ENCODE measurements at regions of chr22 and their contacts with region 1.

Region 1: DNA sequence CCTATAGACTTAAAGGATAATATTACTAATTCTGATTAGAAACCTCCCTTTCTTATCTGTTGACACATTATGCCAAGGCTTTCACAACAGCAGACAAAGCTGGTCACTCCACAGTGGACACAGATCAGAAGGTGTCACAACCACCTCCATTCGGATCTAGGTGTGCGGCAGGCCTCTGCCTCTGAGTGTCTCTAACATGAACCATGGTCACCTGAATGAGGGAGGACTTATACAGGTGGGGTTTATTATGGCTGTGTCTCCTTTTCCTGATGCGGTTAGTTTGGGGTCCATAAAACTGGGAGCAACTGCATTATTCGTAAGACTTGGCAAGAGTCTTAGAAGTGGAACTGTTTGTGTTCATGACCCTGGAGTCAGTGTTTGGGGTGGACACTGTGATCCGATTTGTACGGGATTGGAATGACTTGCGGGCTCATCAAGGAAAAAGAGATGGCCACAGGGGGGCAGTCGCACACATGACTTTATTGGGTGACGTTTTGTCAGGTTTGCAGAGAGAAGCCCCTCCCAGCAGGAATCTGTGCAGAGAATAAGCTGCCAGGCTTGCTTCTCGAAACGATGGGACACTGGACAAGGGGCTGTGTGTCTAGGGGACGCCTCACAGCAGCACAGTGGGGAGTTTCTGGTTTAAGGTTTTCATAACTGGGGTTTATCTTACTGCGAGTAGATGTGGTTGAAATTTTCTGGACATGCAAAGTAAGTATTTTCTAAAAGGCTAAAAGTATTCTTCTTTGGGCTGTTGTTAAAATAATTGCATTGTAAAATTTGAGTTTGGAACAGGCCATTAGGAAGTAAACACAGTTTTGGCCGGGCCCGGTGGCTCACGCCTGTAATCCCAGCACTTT is 90.6 kb downstream of the GAB4 start:
- DNase-seq: peak; percentile 54 to 80
- ATAC-seq: no peak
- H3K4me3 ChIP-seq: no peak overlapping the region
- H3K27ac ChIP-seq: no peak overlapping the region
- H3K4me1 ChIP-seq: peaks cover 0 to 2% of the 10 kb centered on the region in 2 donors
- H3K27me3 ChIP-seq: no peaks in the 10 kb centered on the region

Region 2: DNA sequence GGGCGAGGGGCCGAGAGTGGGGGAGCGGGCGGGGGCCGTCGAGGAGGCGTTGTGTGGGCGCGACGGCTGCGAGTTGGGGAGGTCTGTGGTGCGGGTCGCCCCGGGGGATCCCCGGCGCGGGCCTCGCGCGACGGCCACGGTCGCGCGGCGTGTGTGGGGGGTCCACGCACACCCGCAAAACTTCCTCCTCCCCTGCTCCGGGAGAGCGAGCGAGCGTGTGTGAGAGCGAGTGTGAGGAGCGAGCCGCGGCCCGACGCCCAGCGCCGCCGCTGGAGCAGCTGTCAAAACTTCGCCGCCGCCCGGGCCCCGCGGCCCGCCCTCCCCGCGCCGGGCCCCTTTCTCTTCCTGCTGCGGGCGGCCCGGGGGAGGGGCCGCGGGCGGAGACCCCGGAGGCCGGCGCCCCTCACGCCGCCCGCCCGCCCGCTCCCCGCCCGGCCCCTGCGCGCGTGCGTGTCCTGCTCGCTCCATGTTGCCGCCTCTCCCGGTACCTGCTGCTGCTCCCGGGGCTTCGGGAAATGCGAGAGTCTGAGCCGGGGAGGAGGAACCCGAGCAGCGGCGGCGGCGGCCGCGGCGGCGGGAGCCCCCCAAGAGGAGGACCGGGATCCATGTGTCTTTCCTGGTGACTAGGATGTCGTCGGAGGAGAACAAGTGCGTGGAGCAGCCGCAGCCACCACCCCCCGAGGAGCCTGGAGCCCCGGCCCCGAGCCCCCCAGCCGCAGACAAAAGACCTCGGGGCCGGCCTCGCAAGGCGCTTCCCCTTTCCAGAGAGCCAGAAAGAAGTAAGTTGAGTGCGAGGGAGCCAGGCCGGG is 315.7 kb before region 1 on chr22:
- intact Hi-C with region 1: no loop called
- DNase-seq: peak in 1 of 2 donors; percentile 76
- ATAC-seq: peak; percentile 27
- H3K4me3 ChIP-seq: peak overlapping the region; percentile 43 to 80
- H3K27ac ChIP-seq: peak overlapping the region; percentile 67 to 71
- H3K4me1 ChIP-seq: no peaks in the 10 kb centered on the region
- H3K27me3 ChIP-seq: peaks cover 0 to 3% of the 10 kb centered on the region in 2 donors

Region 3: GRCh38 chr22:16774911-16775500 is 142.4 kb before region 1 on chr22:
- intact Hi-C with region 1: loop called in 1 of 2 experiments (anchors 10 kb)
- DNase-seq: no peak
- ATAC-seq: no peak
- H3K4me3 ChIP-seq: no peak overlapping the region
- H3K27ac ChIP-seq: no peak overlapping the region
- H3K4me1 ChIP-seq: no peaks in the 10 kb centered on the region
- H3K27me3 ChIP-seq: no peaks in the 10 kb centered on the region

Region 4: GRCh38 chr22:16932577-16932976 is 15.2 kb after region 1 on chr22:
- intact Hi-C with region 1: no loop called
- DNase-seq: no peak
- ATAC-seq: no peak
- H3K4me3 ChIP-seq: no peak overlapping the region
- H3K27ac ChIP-seq: no peak overlapping the region
- H3K4me1 ChIP-seq: no peaks in the 10 kb centered on the region
- H3K27me3 ChIP-seq: no peaks in the 10 kb centered on the region

Region 5: GRCh38 chr22:17057959-17058814 is 140.8 kb after region 1 on chr22:
- intact Hi-C with region 1: loop called in 1 of 2 experiments (anchors 10 kb)
- DNase-seq: no peak
- ATAC-seq: peak; percentile 82
- H3K4me3 ChIP-seq: no peak overlapping the region
- H3K27ac ChIP-seq: no peak overlapping the region
- H3K4me1 ChIP-seq: no peaks in the 10 kb centered on the region
- H3K27me3 ChIP-seq: no peaks in the 10 kb centered on the region

Measured in aorta (tissue), 5 donors.